Mammary epithelial cell (primary cell): ENCODE measurements at regions of chr2 and their contacts with region 1.

Region 1: DNA sequence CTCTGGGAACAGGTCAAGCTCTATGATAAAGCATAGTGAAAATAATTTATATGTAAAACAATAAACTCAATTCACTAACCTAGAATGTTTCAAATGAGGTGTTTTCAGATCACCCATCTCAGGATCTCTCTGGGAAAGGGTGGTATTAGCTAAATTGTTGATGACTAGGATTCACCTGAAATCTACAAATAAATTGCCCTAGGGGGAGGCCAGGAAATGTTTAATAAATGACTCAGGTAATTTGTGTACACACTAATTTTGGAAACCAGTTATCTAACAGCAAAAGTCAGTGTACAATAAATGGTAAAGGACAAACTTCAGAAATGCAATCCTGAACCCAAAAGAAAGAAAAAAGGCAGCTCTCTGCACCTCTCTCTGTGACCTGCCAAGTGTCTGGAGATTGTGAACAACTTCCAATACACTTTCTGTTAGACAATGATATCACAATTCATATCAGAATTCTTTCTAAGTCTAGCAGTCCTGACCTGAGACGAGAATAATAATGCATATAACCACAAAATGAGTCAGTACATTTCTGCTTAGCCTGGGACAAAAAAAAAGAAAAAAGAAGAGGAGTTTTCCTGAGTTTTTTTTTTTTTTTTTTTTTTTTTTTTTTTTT is 760.0 kb downstream of the EPHA4 start:
- DNase-seq: peak; percentile 78
- H3K4me3 ChIP-seq: no peak overlapping the region
- H3K27ac ChIP-seq: peak overlapping the region; percentile 49
- H3K4me1 ChIP-seq: peaks cover 16% of the 10 kb centered on the region
- H3K27me3 ChIP-seq: no peaks in the 10 kb centered on the region
- CTCF ChIP-seq: no peak

Region 2: GRCh38 chr2:220880623-220881596 is 68.8 kb after region 1 on chr2:
- CTCF ChIA-PET with region 1: no interaction called
- dilution Hi-C with region 1: no loop called
- in situ Hi-C with region 1: no loop called
- intact Hi-C with region 1: loop called (anchors 5 kb)
- DNase-seq: peak; percentile 52
- H3K4me3 ChIP-seq: no peak overlapping the region
- H3K27ac ChIP-seq: peak overlapping the region; percentile 63
- H3K4me1 ChIP-seq: peaks cover 13% of the 10 kb centered on the region
- H3K27me3 ChIP-seq: no peaks in the 10 kb centered on the region
- CTCF ChIP-seq: no peak

Region 3: DNA sequence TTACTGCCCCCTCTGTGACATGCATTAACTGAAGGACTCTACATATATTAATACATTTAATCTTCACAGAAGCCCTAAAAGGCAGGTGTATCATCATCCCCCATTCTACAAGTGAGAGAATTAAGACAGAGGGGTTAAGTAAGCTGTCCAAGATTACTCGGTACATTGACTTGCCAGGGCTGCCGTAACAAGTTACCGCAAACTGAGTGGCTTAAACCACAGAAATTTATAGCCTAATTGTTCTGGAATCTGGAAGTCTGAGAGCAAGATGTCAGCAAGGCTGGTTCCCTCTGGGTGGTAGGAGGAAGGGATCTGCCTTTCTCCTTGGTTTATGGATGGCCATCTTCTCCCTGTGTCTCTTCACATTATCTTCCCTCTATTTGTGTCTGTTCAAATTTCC is 154.6 kb after region 1 on chr2:
- CTCF ChIA-PET with region 1: no interaction called
- dilution Hi-C with region 1: no loop called
- in situ Hi-C with region 1: no loop called
- intact Hi-C with region 1: no loop called
- DNase-seq: peak; percentile 87
- H3K4me3 ChIP-seq: no peak overlapping the region
- H3K27ac ChIP-seq: no peak overlapping the region
- H3K4me1 ChIP-seq: peaks cover 10% of the 10 kb centered on the region
- H3K27me3 ChIP-seq: no peaks in the 10 kb centered on the region
- CTCF ChIP-seq: no peak